GM12878 (cell line): ENCODE measurements at regions of chr16 and their contacts with region 1.

Region 1: GRCh38 chr16:83215406-83216001 is 588.7 kb downstream of the CDH13 start:
- DNase-seq: no peak
- ATAC-seq: peak; percentile 68
- H3K4me3 ChIP-seq: no peak overlapping the region
- H3K27ac ChIP-seq: no peak overlapping the region
- H3K4me1 ChIP-seq: no peaks in the 10 kb centered on the region
- H3K27me3 ChIP-seq: no peaks in the 10 kb centered on the region
- CTCF ChIP-seq: peak; percentile 58 to 86 (median 80)
- EP300 ChIP-seq: no peak
- POLR2A ChIP-seq: no peak
- RAD21 ChIP-seq: peak; percentile 85

Region 2: DNA sequence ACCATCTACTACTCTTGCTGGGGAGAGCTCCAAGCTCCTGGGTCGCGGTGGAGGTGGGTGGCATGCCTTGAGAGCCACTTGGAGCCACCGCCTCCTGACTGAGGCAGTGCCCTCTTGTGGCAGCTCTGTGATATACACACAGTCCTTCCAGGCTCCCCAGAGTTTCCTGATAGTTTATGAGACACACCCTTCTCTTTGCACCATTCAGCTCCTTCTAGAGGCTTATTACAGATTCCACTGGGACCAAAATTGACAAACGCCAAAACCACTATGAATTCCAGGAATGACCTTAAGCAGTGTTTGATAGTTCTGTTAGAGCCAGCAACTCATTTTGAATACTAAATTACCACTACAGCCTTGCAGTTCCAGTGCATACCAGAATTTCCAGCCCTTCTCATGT is 758.8 kb before region 1 on chr16:
- CTCF ChIA-PET with region 1: no interaction called
- POLR2A ChIA-PET with region 1: no interaction called
- RAD21 ChIA-PET with region 1: no interaction called
- SMC1A ChIA-PET with region 1: no interaction called
- in situ Hi-C with region 1: no loop called
- intact Hi-C with region 1: loop called (anchors 10 kb)
- DNase-seq: no peak
- ATAC-seq: peak; percentile 98
- H3K4me3 ChIP-seq: no peak overlapping the region
- H3K27ac ChIP-seq: no peak overlapping the region
- H3K4me1 ChIP-seq: no peaks in the 10 kb centered on the region
- H3K27me3 ChIP-seq: no peaks in the 10 kb centered on the region; a peak in 1 of 4 replicates
- CTCF ChIP-seq: peak; percentile 67 to 82 (median 73)
- EP300 ChIP-seq: no peak
- POLR2A ChIP-seq: no peak
- RAD21 ChIP-seq: peak; percentile 49

Region 3: GRCh38 chr16:83113317-83113716 is 102.2 kb before region 1 on chr16:
- CTCF ChIA-PET with region 1: interaction called, 5 read pairs
- POLR2A ChIA-PET with region 1: interaction called, 3 read pairs
- RAD21 ChIA-PET with region 1: no interaction called
- SMC1A ChIA-PET with region 1: interaction called, 3 read pairs
- in situ Hi-C with region 1: no loop called
- intact Hi-C with region 1: loop called (anchors 5 kb)
- DNase-seq: no peak
- ATAC-seq: peak; percentile 60
- H3K4me3 ChIP-seq: no peak overlapping the region
- H3K27ac ChIP-seq: no peak overlapping the region
- H3K4me1 ChIP-seq: no peaks in the 10 kb centered on the region
- H3K27me3 ChIP-seq: no peaks in the 10 kb centered on the region
- CTCF ChIP-seq: peak in 2 of 3 experiments; percentile 10 to 24; a peak in 3 of 6 replicates
- EP300 ChIP-seq: no peak
- POLR2A ChIP-seq: no peak
- RAD21 ChIP-seq: no peak

Region 4: DNA sequence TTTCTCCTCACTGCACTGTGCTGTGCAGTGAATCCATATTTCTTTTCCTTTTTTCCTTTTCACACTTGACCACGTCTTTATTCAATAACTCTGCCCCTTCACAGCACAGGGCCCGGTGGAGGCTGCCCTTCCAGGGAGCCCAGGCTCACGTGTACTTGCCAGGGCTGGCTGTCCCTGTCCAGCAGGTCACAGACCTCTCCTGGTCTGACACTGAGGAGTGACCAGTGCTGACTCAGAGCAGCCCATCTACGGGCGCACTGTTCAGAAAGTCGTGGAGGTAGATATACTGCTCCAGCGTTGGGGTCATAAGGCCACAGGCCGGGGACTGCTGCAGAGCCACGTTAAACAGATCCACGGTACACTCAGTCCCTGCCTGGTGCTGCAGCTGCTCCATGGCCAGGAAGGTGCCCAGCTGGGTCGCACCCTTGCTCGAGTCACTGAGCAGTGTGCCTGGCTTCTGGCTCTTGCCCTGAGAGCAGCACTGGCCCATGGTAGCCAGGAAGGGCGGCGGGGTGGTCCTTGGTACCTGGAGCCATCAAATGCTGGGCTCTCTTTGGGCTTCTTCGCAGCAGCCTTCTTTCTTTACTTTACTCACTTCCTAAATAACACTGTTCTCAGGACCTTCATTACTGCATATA is 57.1 kb before region 1 on chr16:
- CTCF ChIA-PET with region 1: no interaction called
- POLR2A ChIA-PET with region 1: no interaction called
- RAD21 ChIA-PET with region 1: no interaction called
- SMC1A ChIA-PET with region 1: no interaction called
- in situ Hi-C with region 1: no loop called
- intact Hi-C with region 1: no loop called
- DNase-seq: no peak
- ATAC-seq: no peak
- H3K4me3 ChIP-seq: no peak overlapping the region
- H3K27ac ChIP-seq: no peak overlapping the region
- H3K4me1 ChIP-seq: no peaks in the 10 kb centered on the region
- H3K27me3 ChIP-seq: no peaks in the 10 kb centered on the region
- CTCF ChIP-seq: no peak
- EP300 ChIP-seq: no peak
- POLR2A ChIP-seq: no peak
- RAD21 ChIP-seq: no peak

Region 5: DNA sequence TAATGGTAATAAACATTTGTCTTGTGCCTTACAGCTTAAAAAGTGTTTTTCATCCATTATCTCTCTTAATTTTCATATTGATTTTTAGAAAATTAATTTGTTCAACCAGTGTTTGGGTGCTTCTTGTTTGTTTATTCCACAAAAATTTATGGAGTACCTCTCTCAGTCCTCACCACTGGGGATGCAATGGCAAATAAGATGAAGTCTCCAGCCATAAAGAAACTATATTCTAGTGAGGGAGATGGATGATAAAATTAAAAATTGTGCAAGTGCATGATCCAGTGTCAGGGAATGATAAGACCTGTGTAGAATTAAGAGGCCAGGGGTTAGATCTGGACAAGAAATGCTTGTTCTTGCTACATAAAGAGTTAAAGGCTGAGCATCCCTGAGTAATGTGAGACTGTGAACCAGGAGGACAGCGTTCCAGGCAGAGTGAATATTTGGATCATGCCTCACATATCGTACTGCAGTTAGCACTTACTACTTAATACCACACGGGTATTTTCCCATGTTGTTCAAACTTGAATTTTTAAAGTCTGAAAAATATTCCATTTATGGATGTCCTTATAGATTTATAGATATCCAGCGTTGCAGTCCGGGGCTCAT is 56.6 kb after region 1 on chr16:
- CTCF ChIA-PET with region 1: no interaction called
- POLR2A ChIA-PET with region 1: no interaction called
- RAD21 ChIA-PET with region 1: no interaction called
- SMC1A ChIA-PET with region 1: no interaction called
- in situ Hi-C with region 1: loop called (anchors 10 kb)
- intact Hi-C with region 1: no loop called
- DNase-seq: no peak
- ATAC-seq: no peak
- H3K4me3 ChIP-seq: no peak overlapping the region
- H3K27ac ChIP-seq: no peak overlapping the region
- H3K4me1 ChIP-seq: no peaks in the 10 kb centered on the region
- H3K27me3 ChIP-seq: no peaks in the 10 kb centered on the region
- CTCF ChIP-seq: no peak
- EP300 ChIP-seq: no peak
- POLR2A ChIP-seq: no peak
- RAD21 ChIP-seq: no peak